Heart left ventricle (tissue), 16 donors: ENCODE measurements at regions of chr1 and their contacts with region 1.

Region 1: GRCh38 chr1:147273409-147274336 is 31.2 kb downstream of the CHD1L start:
- DNase-seq: peak in 2 of 5 donors; percentile 22 to 30
- ATAC-seq: peak in 3 of 4 donors; percentile 66 to 89 (median 80)
- H3K4me3 ChIP-seq: no peak overlapping the region
- H3K27ac ChIP-seq: peak overlapping the region in 6 of 12 donors; percentile 2 to 61 (median 18)
- H3K4me1 ChIP-seq: peaks cover 0 to 16% (median 6%) of the 10 kb centered on the region in 12 donors
- H3K27me3 ChIP-seq: no peaks in the 10 kb centered on the region
- CTCF ChIP-seq: peak; percentile 29 to 73 (median 51)
- POLR2A ChIP-seq: no peak

Region 2: DNA sequence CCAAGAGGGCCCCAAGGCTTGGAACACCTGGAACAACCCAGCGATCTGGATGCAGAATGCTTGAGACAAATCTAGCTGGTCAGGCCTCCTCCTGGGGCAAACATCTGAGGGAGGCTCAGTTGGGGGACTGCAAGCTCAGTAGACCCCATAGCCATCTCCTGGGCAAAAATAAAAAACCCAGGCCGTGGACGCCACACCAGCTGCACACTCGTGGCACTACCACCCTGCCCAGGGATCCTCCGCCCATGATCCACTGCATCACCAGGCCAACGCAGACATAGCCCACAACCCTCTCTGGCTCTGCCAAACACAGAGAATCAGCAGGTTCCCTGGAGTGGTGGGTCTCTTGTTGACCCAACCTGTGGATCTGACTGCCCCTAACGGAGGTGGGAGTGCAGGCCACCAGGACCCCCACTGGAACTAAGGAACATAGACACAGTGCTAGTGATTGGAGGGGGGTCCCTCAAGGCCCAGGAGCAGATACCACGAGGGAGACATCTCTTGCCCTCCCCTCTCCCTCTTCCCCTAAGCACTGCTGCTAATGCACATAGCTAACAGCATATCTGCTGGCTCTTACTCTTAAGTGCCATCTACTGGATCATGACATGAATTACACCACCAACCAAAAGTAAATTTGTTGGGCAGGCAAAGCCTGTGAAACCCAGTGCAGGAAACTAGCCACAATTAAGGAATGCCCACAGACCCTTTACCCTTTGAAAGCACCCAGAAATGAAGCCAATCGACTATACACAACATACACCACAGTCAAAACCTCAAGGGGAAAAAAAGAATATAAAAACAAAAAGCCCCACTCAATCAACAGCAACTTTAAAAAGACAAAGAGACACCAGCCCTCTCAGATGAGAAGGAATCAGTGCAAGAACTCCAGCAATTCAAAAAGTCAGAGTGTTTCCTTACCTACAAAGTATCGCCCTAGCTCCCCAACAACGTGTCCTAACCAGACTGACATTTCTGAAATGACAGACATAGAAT is 116.2 kb after region 1 on chr1:
- intact Hi-C with region 1: loop called in 9 of 10 experiments (anchors 2 to 10 kb)
- DNase-seq: no peak
- ATAC-seq: peak in 3 of 4 donors; percentile 22 to 57 (median 31)
- H3K4me3 ChIP-seq: no peak overlapping the region
- H3K27ac ChIP-seq: no peak overlapping the region
- H3K4me1 ChIP-seq: no peaks in the 10 kb centered on the region
- H3K27me3 ChIP-seq: peaks cover 0 to 6% (median 0%) of the 10 kb centered on the region in 9 donors
- CTCF ChIP-seq: peak; percentile 46 to 72 (median 60)
- POLR2A ChIP-seq: no peak

Region 3: DNA sequence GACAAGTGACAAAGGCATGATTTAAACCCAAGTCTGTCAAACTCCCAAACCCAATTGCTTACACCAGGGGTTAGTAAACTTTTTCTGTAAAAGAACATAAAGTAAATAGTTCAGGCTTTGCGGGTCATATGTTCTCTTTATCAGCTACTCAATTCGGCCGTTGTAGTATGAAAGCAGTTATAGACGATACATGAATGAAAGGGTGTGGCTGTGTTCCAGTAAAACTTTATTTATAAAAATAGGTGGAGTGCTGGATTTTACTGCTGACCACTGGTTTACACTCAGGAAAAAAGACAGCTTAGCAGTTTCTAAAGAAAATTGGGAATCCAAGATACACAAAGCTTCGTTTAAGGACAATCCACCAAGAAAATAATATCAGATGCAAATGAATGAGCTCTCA is 143.4 kb after region 1 on chr1:
- intact Hi-C with region 1: no loop called
- DNase-seq: no peak
- ATAC-seq: no peak
- H3K4me3 ChIP-seq: no peak overlapping the region
- H3K27ac ChIP-seq: no peak overlapping the region
- H3K4me1 ChIP-seq: no peaks in the 10 kb centered on the region
- H3K27me3 ChIP-seq: no peaks in the 10 kb centered on the region
- CTCF ChIP-seq: no peak
- POLR2A ChIP-seq: no peak

Region 4: GRCh38 chr1:147700042-147701006 is 426.7 kb after region 1 on chr1:
- intact Hi-C with region 1: loop called in 2 of 10 experiments (anchors 10 kb)
- DNase-seq: peak; percentile 53 to 61 (median 57)
- ATAC-seq: peak; percentile 81 to 90 (median 88)
- H3K4me3 ChIP-seq: no peak overlapping the region
- H3K27ac ChIP-seq: peak overlapping the region in 1 of 12 donors; percentile 31
- H3K4me1 ChIP-seq: peaks cover 0 to 7% (median 0%) of the 10 kb centered on the region in 12 donors
- H3K27me3 ChIP-seq: no peaks in the 10 kb centered on the region
- CTCF ChIP-seq: peak; percentile 65 to 87 (median 77)
- POLR2A ChIP-seq: no peak